B cell (primary cell): ENCODE measurements at regions of chr11 and their contacts with region 1.

Region 1: GRCh38 chr11:45031912-45032519 is 81.3 kb upstream of the TP53I11 start:
- DNase-seq: peak; percentile 89
- ATAC-seq: peak; percentile 46
- H3K4me3 ChIP-seq: no peak overlapping the region
- H3K4me3 Mint-ChIP-seq: peak overlapping the region; percentile 59
- H3K27ac ChIP-seq: peak overlapping the region; percentile 54 to 61
- H3K27ac Mint-ChIP-seq: peak overlapping the region; percentile 80
- H3K4me1 ChIP-seq: peaks cover 35 to 50% of the 10 kb centered on the region in 2 donors
- H3K4me1 Mint-ChIP-seq: peaks cover 61% of the 10 kb centered on the region
- H3K27me3 ChIP-seq: no peaks in the 10 kb centered on the region
- H3K27me3 Mint-ChIP-seq: no peaks in the 10 kb centered on the region
- CTCF ChIP-seq: no peak

Region 2: DNA sequence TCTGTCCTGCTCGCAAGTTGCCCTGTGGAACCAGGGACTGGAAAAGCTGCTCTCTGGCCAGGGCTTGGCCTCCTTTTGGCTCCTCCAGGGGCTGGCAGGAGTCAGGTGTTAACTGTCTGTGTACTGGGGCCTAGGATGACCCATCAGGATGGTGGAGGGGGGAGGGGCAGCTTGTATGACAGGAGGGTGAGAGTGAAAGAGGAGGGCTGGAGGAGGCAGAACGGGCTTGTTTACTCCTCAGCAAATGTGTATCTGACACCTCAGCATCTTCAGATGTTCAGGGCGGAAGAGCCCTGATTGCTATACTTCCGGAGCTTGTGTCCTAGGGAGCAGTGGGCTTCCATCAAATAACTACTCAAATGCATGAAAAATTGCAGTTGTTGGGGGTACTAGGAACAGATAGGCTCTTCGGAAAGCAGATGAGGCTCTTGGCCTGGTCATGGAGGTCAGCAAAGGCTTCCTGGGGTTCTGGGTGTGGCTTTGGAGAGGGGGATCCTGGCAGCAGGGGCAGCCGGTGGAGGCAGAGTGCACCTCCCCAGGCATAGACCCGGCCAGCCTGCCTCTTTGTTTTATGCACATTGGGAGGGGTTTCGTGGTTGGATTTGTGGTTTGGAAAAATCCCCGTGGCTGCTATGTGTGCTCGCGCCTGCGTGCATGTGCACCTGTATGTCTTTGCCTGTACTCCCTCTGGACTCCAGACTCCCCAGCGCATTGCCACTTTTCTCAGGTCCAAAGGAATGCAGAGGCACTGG is 435.3 kb before region 1 on chr11:
- CTCF ChIA-PET with region 1: no interaction called
- POLR2A ChIA-PET with region 1: no interaction called
- intact Hi-C with region 1: no loop called
- DNase-seq: peak; percentile 90
- ATAC-seq: peak; percentile 25
- H3K4me3 ChIP-seq: peak overlapping the region in 2 of 5 experiments; percentile 9 to 28
- H3K4me3 Mint-ChIP-seq: peak overlapping the region; percentile 77
- H3K27ac ChIP-seq: peak overlapping the region; percentile 78 to 85
- H3K27ac Mint-ChIP-seq: peak overlapping the region; percentile 92
- H3K4me1 ChIP-seq: peaks cover 69 to 92% of the 10 kb centered on the region in 2 donors
- H3K4me1 Mint-ChIP-seq: peaks cover 94% of the 10 kb centered on the region
- H3K27me3 ChIP-seq: no peaks in the 10 kb centered on the region
- H3K27me3 Mint-ChIP-seq: no peaks in the 10 kb centered on the region
- CTCF ChIP-seq: no peak

Region 3: GRCh38 chr11:44611687-44612434 is 420.2 kb before region 1 on chr11:
- CTCF ChIA-PET with region 1: no interaction called
- POLR2A ChIA-PET with region 1: no interaction called
- intact Hi-C with region 1: loop called (anchors 2 kb)
- DNase-seq: peak; percentile 94
- ATAC-seq: peak; percentile 51
- H3K4me3 ChIP-seq: peak overlapping the region in 2 of 5 experiments; percentile 2 to 40
- H3K4me3 Mint-ChIP-seq: peak overlapping the region; percentile 59
- H3K27ac ChIP-seq: peak overlapping the region; percentile 97 to 99
- H3K27ac Mint-ChIP-seq: peak overlapping the region; percentile 96
- H3K4me1 ChIP-seq: peaks cover 97 to 100% of the 10 kb centered on the region in 2 donors
- H3K4me1 Mint-ChIP-seq: peaks cover 97% of the 10 kb centered on the region
- H3K27me3 ChIP-seq: no peaks in the 10 kb centered on the region
- H3K27me3 Mint-ChIP-seq: no peaks in the 10 kb centered on the region
- CTCF ChIP-seq: no peak

Region 4: GRCh38 chr11:44943118-44943517 is 88.9 kb before region 1 on chr11:
- CTCF ChIA-PET with region 1: interaction called, 13 read pairs
- POLR2A ChIA-PET with region 1: interaction called, 16 read pairs
- intact Hi-C with region 1: loop called (anchors 1 kb)
- DNase-seq: peak; percentile 89
- ATAC-seq: peak; percentile 93
- H3K4me3 ChIP-seq: peak overlapping the region in 4 of 5 experiments; percentile 10 to 53 (median 26)
- H3K4me3 Mint-ChIP-seq: peak overlapping the region; percentile 90
- H3K27ac ChIP-seq: peak overlapping the region; percentile 38 to 67
- H3K27ac Mint-ChIP-seq: peak overlapping the region; percentile 95
- H3K4me1 ChIP-seq: peaks cover 57 to 74% of the 10 kb centered on the region in 2 donors
- H3K4me1 Mint-ChIP-seq: peaks cover 92% of the 10 kb centered on the region
- H3K27me3 ChIP-seq: no peaks in the 10 kb centered on the region
- H3K27me3 Mint-ChIP-seq: no peaks in the 10 kb centered on the region
- CTCF ChIP-seq: no peak

Region 5: GRCh38 chr11:44950625-44951476 is 81.2 kb before region 1 on chr11 and contains the start of gene TP53I11:
- CTCF ChIA-PET with region 1: interaction called, 10 read pairs
- POLR2A ChIA-PET with region 1: interaction called, 16 read pairs
- intact Hi-C with region 1: loop called (anchors 1 kb)
- DNase-seq: peak; percentile 84
- ATAC-seq: peak; percentile 76
- H3K4me3 ChIP-seq: peak within 1 kb of the TSS; percentile 51 to 97 (median 83)
- H3K4me3 Mint-ChIP-seq: peak within 1 kb of the TSS; percentile 89
- H3K27ac ChIP-seq: peak within 1 kb of the TSS; percentile 64 to 85
- H3K27ac Mint-ChIP-seq: peak within 1 kb of the TSS; percentile 78
- H3K4me1 ChIP-seq: peaks cover 13 to 31% of the 10 kb centered on the region in 2 donors
- H3K4me1 Mint-ChIP-seq: peaks cover 61% of the 10 kb centered on the region
- H3K27me3 ChIP-seq: no peaks in the 10 kb centered on the region
- H3K27me3 Mint-ChIP-seq: no peaks in the 10 kb centered on the region
- CTCF ChIP-seq: peak; percentile 80
- total RNA-seq, gene TP53I11: 229 and 240 TPM in 2 replicates

Region 6: DNA sequence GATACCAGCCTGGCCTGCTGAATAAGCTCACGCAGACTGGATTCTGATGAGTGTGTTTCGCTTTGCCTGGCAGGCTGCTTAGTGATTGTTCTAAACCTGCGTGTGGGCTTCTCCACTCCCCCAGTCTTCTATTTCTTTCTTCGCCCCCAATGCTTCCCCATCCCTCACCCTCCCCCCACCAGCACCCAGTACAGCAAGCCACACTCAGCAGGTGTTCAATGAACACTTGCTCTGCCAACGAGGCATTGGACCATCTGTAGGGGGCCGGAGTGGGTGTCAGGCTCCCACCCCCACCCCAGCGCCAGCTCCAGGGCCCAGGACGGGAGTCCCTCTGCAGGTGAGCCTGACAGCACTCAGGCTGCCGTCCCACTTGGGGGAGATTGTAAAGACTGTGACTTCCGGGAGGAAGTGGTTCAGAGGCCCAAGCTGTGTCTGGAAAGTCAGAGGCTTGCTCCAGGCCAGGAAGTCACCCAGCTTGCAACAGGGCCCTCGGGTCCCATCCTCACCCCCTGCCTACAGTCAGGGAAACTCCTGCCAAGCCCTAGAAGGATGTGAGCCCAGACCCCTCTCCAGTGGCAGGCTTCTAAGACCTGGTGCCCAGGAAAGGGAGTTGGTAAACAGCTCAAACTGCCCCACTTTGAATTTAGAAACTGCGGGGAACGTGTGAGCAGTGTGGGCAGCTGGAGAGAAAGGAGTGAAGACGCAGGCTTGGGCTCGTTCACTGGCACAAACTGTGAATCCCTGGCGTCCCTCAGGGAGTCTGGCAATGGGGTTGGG is 48.1 kb after region 1 on chr11:
- CTCF ChIA-PET with region 1: interaction called, 22 read pairs
- POLR2A ChIA-PET with region 1: interaction called, 8 read pairs
- intact Hi-C with region 1: loop called (anchors 1 kb)
- DNase-seq: peak; percentile 78
- ATAC-seq: peak; percentile 59
- H3K4me3 ChIP-seq: peak overlapping the region in 2 of 5 experiments; percentile 5 to 6
- H3K4me3 Mint-ChIP-seq: peak overlapping the region; percentile 71
- H3K27ac ChIP-seq: peak overlapping the region; percentile 65 to 73
- H3K27ac Mint-ChIP-seq: peak overlapping the region; percentile 93
- H3K4me1 ChIP-seq: peaks cover 52 to 65% of the 10 kb centered on the region in 2 donors
- H3K4me1 Mint-ChIP-seq: peaks cover 74% of the 10 kb centered on the region
- H3K27me3 ChIP-seq: no peaks in the 10 kb centered on the region
- H3K27me3 Mint-ChIP-seq: no peaks in the 10 kb centered on the region
- CTCF ChIP-seq: no peak